SK-N-SH (cell line): ENCODE measurements at regions of chr7 and their contacts with region 1.

Region 1: GRCh38 chr7:92447345-92448204 is at the start of gene GATAD1:
- DNase-seq: peak; percentile 99
- H3K4me3 ChIP-seq: peak within 1 kb of the TSS; percentile 70 to 99
- H3K27ac ChIP-seq: peak within 1 kb of the TSS; percentile 77 to 97
- H3K4me1 ChIP-seq: peaks cover 8 to 13% of the 10 kb centered on the region in 2 experiments; a peak in 2 of 4 replicates
- H3K27me3 ChIP-seq: no peaks in the 10 kb centered on the region
- CTCF ChIP-seq: no peak; the same call in 1 of the 2 replicates
- EP300 ChIP-seq: peak in 1 of 2 experiments; percentile 56; a peak in 2 of 4 replicates
- RAD21 ChIP-seq: no peak
- polyA plus RNA-seq, gene GATAD1: 30.6 and 47.9 TPM in 2 replicates

Region 2: GRCh38 chr7:91835846-91836368 is 611.7 kb before region 1 on chr7:
- CTCF ChIA-PET with region 1: interaction called, 27 read pairs
- POLR2A ChIA-PET with region 1: no interaction called
- DNase-seq: no peak
- H3K4me3 ChIP-seq: no peak overlapping the region
- H3K27ac ChIP-seq: no peak overlapping the region
- H3K4me1 ChIP-seq: peaks cover 0 to 5% of the 10 kb centered on the region in 2 experiments; a peak in 3 of 4 replicates
- H3K27me3 ChIP-seq: no peaks in the 10 kb centered on the region
- CTCF ChIP-seq: no peak
- EP300 ChIP-seq: no peak
- RAD21 ChIP-seq: no peak

Region 3: GRCh38 chr7:92119213-92119759 is 328.3 kb before region 1 on chr7:
- CTCF ChIA-PET with region 1: interaction called, 10 read pairs
- POLR2A ChIA-PET with region 1: no interaction called
- DNase-seq: no peak
- H3K4me3 ChIP-seq: no peak overlapping the region
- H3K27ac ChIP-seq: no peak overlapping the region
- H3K4me1 ChIP-seq: no peaks in the 10 kb centered on the region
- H3K27me3 ChIP-seq: no peaks in the 10 kb centered on the region
- CTCF ChIP-seq: no peak
- EP300 ChIP-seq: no peak
- RAD21 ChIP-seq: no peak

Region 4: GRCh38 chr7:92200791-92201190 is 246.8 kb before region 1 on chr7:
- CTCF ChIA-PET with region 1: interaction called, 13 read pairs
- POLR2A ChIA-PET with region 1: no interaction called
- DNase-seq: no peak
- H3K4me3 ChIP-seq: no peak overlapping the region
- H3K27ac ChIP-seq: no peak overlapping the region
- H3K4me1 ChIP-seq: no peaks in the 10 kb centered on the region
- H3K27me3 ChIP-seq: no peaks in the 10 kb centered on the region
- CTCF ChIP-seq: no peak
- EP300 ChIP-seq: no peak
- RAD21 ChIP-seq: no peak

Region 5: DNA sequence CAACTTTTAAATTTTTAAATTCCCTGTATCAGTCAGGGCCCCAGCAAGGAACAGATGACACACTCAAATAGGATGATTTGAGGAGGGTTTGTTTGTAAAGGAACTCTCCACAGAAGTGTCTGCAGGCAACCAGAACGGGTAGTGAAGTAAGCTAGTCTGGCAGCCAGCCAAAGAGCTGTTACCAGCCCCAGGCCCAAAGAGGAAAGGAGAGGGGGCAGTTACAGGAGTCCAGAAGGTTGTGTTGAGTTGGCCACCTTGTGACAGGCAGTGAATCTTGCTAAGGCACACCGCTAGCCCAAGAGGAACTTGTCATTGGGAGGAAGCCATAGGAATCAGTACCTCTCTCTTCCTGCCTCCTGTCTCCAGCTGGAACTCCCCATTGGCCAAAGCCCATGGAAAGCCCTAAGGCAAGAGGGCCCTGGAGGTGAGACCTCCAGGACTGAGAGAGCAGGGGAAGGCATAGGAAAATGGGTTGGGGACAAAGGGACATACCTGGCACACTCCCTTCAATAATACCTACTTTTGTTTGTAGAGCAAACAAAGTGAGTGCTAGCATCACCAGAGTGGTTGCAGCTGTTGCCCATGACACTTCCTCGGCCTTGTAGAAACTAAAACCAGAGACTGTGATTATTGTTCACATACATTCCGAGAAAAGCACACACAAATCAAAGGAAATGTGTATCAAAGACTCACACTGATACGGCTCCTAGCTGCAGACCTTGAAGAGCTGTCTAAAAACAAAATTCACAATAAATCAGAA is 25.7 kb before region 1 on chr7:
- CTCF ChIA-PET with region 1: interaction called, 108 read pairs
- POLR2A ChIA-PET with region 1: interaction called, 3 read pairs
- DNase-seq: peak; percentile 40
- H3K4me3 ChIP-seq: no peak overlapping the region
- H3K27ac ChIP-seq: no peak overlapping the region
- H3K4me1 ChIP-seq: peaks cover 0 to 3% of the 10 kb centered on the region in 2 experiments; a peak in 1 of 4 replicates
- H3K27me3 ChIP-seq: no peaks in the 10 kb centered on the region
- CTCF ChIP-seq: no peak
- EP300 ChIP-seq: no peak
- RAD21 ChIP-seq: no peak

Region 6: DNA sequence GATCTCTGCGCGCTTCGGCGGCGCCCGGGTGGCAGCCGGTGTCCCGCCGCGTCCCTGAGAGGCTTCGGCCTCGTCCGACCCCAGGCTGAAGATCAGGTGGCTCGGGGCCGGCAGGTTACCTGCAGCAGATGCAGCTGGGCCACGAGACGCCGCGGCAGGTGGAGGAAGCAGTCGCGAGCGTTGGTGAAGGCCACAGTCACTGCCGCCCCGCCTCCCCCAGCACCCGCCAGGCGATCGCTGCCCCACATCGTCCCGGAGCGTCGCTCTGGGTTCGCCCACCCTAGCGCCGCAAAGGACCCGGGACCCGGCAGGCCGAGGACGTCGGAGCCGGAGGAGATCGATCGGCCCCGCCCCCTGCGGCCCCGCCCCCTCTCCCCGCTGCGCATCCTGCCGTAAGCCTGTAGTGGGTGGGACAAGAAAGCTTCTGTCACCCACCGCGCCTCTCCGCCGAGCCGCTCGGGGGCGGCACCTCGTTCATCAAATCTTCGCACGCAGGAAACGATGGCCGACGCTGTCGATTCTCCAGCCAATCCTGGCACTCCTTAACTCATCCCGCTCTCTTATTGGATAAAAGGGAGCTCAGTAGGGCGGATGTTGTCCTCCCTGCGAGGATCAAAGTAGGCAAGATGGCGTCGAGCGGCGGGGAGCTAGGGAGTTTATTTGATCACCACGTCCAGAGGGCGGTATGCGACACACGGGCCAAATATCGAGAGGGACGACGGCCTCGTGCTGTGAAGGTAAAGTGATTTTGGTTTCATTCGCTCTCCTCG is 80.8 kb after region 1 on chr7 and contains the starts of genes PEX1 and RBM48:
- CTCF ChIA-PET with region 1: interaction called, 3 read pairs
- POLR2A ChIA-PET with region 1: interaction called, 10 read pairs
- DNase-seq: peak; percentile 98
- H3K4me3 ChIP-seq: peak within 1 kb of the TSS; percentile 94 to 100
- H3K27ac ChIP-seq: peak within 1 kb of the TSS; percentile 65 to 94
- H3K4me1 ChIP-seq: peaks cover 5 to 13% of the 10 kb centered on the region in 2 experiments; a peak in 2 of 4 replicates
- H3K27me3 ChIP-seq: no peaks in the 10 kb centered on the region
- CTCF ChIP-seq: peak; percentile 65
- EP300 ChIP-seq: no peak
- RAD21 ChIP-seq: no peak
- polyA plus RNA-seq, gene PEX1: 16.0 and 24.9 TPM in 2 replicates
- polyA plus RNA-seq, gene RBM48: 4.7 and 6.4 TPM in 2 replicates

Region 7: DNA sequence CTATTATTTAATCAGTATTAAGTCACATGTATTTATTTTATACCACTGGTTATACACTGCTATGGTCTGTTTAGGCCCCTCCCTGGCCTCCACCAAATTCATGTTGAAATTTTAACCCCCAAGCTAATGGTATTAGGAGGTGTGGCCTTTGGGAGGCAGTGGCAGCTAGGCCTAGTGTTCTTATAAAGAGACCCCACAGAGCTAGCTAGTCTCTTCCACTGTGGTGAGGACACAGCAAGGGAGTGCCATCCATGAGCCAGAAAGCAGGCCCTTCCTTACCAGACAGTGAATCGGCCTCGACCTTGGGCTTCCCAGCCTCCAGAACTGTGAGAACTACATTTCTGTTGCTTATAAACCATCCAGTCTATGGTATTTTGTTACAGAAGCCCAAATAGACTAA is 109.7 kb after region 1 on chr7:
- CTCF ChIA-PET with region 1: no interaction called
- POLR2A ChIA-PET with region 1: no interaction called
- DNase-seq: no peak
- H3K4me3 ChIP-seq: no peak overlapping the region
- H3K27ac ChIP-seq: no peak overlapping the region
- H3K4me1 ChIP-seq: no peaks in the 10 kb centered on the region
- H3K27me3 ChIP-seq: no peaks in the 10 kb centered on the region
- CTCF ChIP-seq: no peak
- EP300 ChIP-seq: no peak
- RAD21 ChIP-seq: no peak

Region 8: DNA sequence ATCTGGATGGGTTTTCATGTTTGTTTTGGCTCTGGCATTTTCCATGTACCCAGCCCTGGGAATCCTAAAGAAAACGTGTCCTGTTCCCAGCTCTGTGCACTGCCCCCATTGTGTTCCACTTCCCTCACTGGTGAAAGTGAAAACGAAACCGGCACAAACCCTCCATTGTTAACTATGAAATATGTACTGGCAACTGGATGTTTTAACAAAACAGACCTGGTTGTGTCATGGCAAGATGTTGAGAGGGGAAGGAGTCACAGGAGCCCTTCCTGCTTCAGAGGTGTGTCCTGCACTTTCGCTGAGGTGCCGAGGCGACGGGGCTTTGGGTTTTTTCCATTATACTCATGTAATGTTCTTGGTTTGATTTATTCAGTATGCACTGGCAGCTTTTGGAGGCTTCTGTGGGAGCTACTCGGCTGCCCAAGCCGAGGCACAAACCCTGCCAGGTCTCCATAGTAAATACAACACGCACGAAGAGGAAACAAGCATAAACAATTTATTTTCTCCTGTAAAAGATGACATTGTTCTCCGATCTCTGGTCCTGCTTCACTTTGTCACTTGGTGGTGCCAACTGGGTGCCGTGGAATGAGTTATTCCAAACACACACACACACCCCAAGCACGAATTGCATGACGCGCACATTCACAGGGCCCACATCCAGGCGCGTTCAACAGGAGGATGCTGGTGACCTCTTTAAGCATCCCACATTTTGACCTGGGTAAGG is 270.6 kb after region 1 on chr7:
- CTCF ChIA-PET with region 1: no interaction called
- POLR2A ChIA-PET with region 1: no interaction called
- DNase-seq: no peak
- H3K4me3 ChIP-seq: no peak overlapping the region
- H3K27ac ChIP-seq: peak overlapping the region in 1 of 2 experiments; percentile 36; a peak in 2 of 4 replicates
- H3K4me1 ChIP-seq: peaks cover 0 to 17% of the 10 kb centered on the region in 2 experiments; a peak in 2 of 4 replicates
- H3K27me3 ChIP-seq: no peaks in the 10 kb centered on the region
- CTCF ChIP-seq: no peak
- EP300 ChIP-seq: no peak
- RAD21 ChIP-seq: no peak

Region 9: GRCh38 chr7:92953657-92954056 is 506.1 kb after region 1 on chr7:
- CTCF ChIA-PET with region 1: no interaction called
- POLR2A ChIA-PET with region 1: no interaction called
- DNase-seq: no peak
- H3K4me3 ChIP-seq: no peak overlapping the region
- H3K27ac ChIP-seq: no peak overlapping the region
- H3K4me1 ChIP-seq: peaks cover 0 to 2% of the 10 kb centered on the region in 2 experiments; a peak in 1 of 4 replicates
- H3K27me3 ChIP-seq: no peaks in the 10 kb centered on the region
- CTCF ChIP-seq: no peak
- EP300 ChIP-seq: no peak
- RAD21 ChIP-seq: no peak